Mammary epithelial cell (primary cell): ENCODE measurements at regions of chr16 and their contacts with region 1.

Region 1: GRCh38 chr16:71870818-71871217 is 13.2 kb downstream of the ZNF821 start:
- DNase-seq: no peak
- H3K4me3 ChIP-seq: no peak overlapping the region
- H3K27ac ChIP-seq: no peak overlapping the region
- H3K4me1 ChIP-seq: no peaks in the 10 kb centered on the region
- H3K27me3 ChIP-seq: no peaks in the 10 kb centered on the region
- CTCF ChIP-seq: no peak

Region 2: GRCh38 chr16:71826533-71827017 is 44.2 kb before region 1 on chr16:
- CTCF ChIA-PET with region 1: no interaction called
- dilution Hi-C with region 1: loop called (anchors 5 kb)
- in situ Hi-C with region 1: no loop called
- intact Hi-C with region 1: no loop called
- DNase-seq: no peak
- H3K4me3 ChIP-seq: no peak overlapping the region
- H3K27ac ChIP-seq: no peak overlapping the region
- H3K4me1 ChIP-seq: no peaks in the 10 kb centered on the region
- H3K27me3 ChIP-seq: no peaks in the 10 kb centered on the region
- CTCF ChIP-seq: no peak

Region 3: DNA sequence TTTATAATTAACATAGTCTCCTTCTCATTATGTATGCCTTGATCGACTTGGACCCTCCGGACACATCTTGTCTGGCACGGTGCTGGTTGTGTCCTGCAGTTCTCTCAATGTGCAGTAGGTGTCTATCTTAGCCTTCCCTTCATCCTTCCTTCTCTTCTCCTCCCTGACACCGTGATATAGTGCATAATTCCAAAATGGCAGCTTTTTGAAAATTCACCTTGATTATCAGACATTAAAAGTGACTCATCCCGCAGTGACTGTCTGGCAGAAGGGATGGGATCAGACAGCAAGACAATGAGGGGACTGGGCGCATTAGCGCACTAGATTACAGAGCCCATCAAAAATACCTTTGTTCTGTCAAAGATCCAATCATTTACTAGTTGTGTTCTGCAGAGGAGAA is 371.1 kb after region 1 on chr16:
- CTCF ChIA-PET with region 1: no interaction called
- dilution Hi-C with region 1: no loop called
- in situ Hi-C with region 1: no loop called
- intact Hi-C with region 1: no loop called
- DNase-seq: peak; percentile 48
- H3K4me3 ChIP-seq: no peak overlapping the region
- H3K27ac ChIP-seq: no peak overlapping the region
- H3K4me1 ChIP-seq: peaks cover 4% of the 10 kb centered on the region
- H3K27me3 ChIP-seq: no peaks in the 10 kb centered on the region
- CTCF ChIP-seq: peak; percentile 94 to 97